Vagina (tissue), 2 donors: ENCODE measurements at regions of chr21 and their contacts with region 1.

Region 1: GRCh38 chr21:40782746-40783145 is 64.2 kb downstream of the DSCAM start:
- DNase-seq: no peak
- H3K4me3 ChIP-seq: no peak overlapping the region
- H3K27ac ChIP-seq: no peak overlapping the region
- H3K4me1 ChIP-seq: no peaks in the 10 kb centered on the region
- H3K27me3 ChIP-seq: no peaks in the 10 kb centered on the region
- CTCF ChIP-seq: no peak
- POLR2A ChIP-seq: no peak

Region 2: GRCh38 chr21:40736145-40736544 is 46.6 kb before region 1 on chr21:
- intact Hi-C with region 1: loop called (anchors 1 kb)
- DNase-seq: no peak
- H3K4me3 ChIP-seq: no peak overlapping the region
- H3K27ac ChIP-seq: no peak overlapping the region
- H3K4me1 ChIP-seq: no peaks in the 10 kb centered on the region
- H3K27me3 ChIP-seq: no peaks in the 10 kb centered on the region
- CTCF ChIP-seq: no peak
- POLR2A ChIP-seq: no peak

Region 3: GRCh38 chr21:40751221-40751620 is 31.5 kb before region 1 on chr21:
- intact Hi-C with region 1: no loop called
- DNase-seq: no peak
- H3K4me3 ChIP-seq: no peak overlapping the region
- H3K27ac ChIP-seq: no peak overlapping the region
- H3K4me1 ChIP-seq: no peaks in the 10 kb centered on the region
- H3K27me3 ChIP-seq: no peaks in the 10 kb centered on the region
- CTCF ChIP-seq: no peak
- POLR2A ChIP-seq: no peak

Region 4: DNA sequence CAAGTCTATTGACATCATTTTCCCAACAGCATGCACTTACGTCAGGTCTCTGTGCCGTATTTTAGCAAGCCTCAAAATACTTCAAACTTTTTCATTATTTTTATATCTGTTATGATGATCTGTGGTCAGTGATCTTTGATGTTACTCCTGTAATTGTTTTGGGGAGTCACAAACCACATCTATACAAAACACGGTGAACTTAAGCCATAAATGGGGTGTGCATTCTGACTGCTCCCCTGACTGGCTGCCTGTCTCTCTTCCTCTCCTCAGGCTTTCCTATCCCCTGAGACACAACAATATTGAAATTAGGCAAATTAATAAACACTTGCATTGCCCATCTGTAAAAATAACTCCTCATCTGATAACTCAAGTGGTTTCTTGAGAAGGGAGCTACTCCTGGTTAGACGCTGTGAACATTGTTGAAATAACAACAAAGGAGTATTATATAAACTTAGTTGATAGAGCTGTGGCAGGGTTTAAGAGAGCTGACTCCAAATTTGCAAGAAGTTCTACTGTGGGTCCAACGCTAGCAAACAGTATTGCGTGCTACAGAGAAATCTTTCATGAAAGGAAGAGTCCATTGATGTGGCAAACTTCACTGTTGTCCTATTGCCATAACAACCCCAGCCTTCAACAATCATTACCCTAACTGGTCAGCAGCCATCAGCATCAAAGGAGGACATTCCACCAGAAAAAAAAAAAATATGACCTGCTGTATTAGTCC is 170.0 kb after region 1 on chr21:
- intact Hi-C with region 1: no loop called
- DNase-seq: no peak
- H3K4me3 ChIP-seq: no peak overlapping the region
- H3K27ac ChIP-seq: no peak overlapping the region
- H3K4me1 ChIP-seq: no peaks in the 10 kb centered on the region
- H3K27me3 ChIP-seq: no peaks in the 10 kb centered on the region
- CTCF ChIP-seq: no peak
- POLR2A ChIP-seq: no peak